ENCODE measurements at regions of chr11 and their contacts with region 1.

Region 1: GRCh38 chr11:34948696-34949095 is 32.3 kb downstream of the PDHX start:
- DNase-seq: no peak
- ATAC-seq: no peak
- H3K4me3 Mint-ChIP-seq: no peak overlapping the region
- H3K27ac Mint-ChIP-seq: no peak overlapping the region
- H3K4me1 Mint-ChIP-seq: peaks cover 9% of the 10 kb centered on the region
- H3K27me3 Mint-ChIP-seq: no peaks in the 10 kb centered on the region

Region 2: GRCh38 chr11:34869426-34869825 is 79.3 kb before region 1 on chr11:
- CTCF ChIA-PET with region 1: no interaction called
- POLR2A ChIA-PET with region 1: no interaction called
- intact Hi-C with region 1: no loop called
- DNase-seq: no peak
- ATAC-seq: no peak
- H3K4me3 Mint-ChIP-seq: no peak overlapping the region
- H3K27ac Mint-ChIP-seq: no peak overlapping the region
- H3K4me1 Mint-ChIP-seq: no peaks in the 10 kb centered on the region
- H3K27me3 Mint-ChIP-seq: no peaks in the 10 kb centered on the region

Region 3: DNA sequence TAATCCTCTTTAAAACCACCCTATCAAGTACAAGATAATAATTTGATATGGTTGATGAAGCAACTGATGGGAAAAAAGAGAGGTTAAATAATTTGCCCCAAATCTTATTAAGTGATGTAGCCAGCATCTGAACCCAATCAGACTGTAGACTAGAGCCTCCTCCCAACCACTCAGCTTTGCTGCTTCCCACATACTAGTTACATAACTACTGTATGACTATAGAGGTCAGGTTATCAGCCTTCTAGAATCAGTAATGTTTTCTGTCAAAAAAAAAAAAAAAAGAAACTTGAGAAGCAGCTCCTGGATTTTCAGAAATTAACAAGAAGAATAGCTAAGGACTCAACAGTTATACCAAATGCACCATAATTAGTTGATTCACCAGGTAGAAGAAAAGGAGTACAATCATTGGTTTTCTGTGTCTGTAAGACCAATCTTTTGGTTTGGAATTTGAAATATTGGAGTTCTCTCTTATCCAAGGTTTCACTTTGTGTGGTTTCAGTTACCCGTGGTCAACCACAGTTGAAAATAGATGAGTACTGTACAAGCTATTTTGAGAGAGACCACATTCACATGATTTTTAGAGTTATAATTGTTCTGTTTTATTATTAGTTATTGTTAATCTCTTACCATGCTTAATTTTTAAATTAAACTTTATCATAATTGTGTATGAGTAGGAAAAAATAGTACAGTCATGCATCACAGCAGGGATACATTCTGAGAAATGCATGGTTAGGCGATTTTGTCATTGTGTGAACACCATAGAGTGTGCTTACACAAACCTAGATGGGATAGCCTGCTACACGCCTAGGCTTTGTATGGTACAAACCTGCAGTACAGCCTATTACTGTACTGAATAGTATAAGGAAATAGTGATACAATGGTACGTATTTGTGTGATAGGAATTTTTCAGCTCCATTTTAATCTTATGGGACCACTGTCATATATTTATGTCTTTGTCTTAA is 39.9 kb after region 1 on chr11:
- CTCF ChIA-PET with region 1: no interaction called
- POLR2A ChIA-PET with region 1: no interaction called
- intact Hi-C with region 1: loop called in 1 of 2 experiments (anchors 5 kb)
- DNase-seq: no peak
- ATAC-seq: no peak
- H3K4me3 Mint-ChIP-seq: no peak overlapping the region
- H3K27ac Mint-ChIP-seq: no peak overlapping the region
- H3K4me1 Mint-ChIP-seq: peaks cover 5% of the 10 kb centered on the region
- H3K27me3 Mint-ChIP-seq: no peaks in the 10 kb centered on the region